ENCODE measurements at regions of chr12 and their contacts with region 1.

Region 1: DNA sequence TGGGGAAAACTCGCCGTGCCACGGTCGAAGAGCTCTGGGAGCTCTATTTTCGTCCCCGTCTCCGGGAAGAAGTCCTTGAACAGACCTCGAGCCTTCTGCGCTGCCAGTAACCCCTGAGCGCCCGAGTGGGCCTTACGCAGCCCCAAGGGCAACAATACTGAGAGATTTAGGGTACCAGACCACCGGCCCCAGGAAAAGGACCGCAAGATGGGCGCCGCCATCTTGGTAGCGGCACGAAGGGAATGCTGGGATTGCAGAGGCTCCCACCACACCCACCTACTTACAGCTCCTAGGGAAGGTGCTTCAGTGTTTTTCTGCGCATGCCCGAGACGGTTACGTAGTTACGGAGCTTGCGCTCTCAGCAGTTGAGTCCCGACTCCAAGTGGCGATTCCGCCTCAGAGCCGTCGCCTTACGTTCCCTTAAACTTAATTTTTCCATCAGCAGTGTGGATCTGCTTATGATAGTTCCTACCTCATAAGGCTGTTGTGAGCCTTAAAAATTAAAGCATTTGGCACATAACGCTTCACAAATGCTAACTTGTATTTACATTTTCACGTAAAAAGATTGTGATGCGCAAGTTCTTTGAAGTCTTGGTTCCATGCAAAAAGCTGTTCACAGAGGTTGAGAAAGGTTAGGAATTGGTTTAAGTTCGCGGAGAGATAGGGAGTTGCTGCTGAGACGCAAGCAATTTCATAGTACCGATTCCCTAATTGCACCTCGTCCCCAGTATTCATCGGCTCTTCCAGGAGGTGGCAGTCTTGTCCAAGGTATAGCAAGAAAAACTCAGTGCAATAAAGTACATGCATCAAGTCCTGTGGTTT is at the start of gene YARS2:
- DNase-seq: peak; percentile 96
- ATAC-seq: peak; percentile 100
- total RNA-seq, gene YARS2: 7.8 TPM

Region 2: DNA sequence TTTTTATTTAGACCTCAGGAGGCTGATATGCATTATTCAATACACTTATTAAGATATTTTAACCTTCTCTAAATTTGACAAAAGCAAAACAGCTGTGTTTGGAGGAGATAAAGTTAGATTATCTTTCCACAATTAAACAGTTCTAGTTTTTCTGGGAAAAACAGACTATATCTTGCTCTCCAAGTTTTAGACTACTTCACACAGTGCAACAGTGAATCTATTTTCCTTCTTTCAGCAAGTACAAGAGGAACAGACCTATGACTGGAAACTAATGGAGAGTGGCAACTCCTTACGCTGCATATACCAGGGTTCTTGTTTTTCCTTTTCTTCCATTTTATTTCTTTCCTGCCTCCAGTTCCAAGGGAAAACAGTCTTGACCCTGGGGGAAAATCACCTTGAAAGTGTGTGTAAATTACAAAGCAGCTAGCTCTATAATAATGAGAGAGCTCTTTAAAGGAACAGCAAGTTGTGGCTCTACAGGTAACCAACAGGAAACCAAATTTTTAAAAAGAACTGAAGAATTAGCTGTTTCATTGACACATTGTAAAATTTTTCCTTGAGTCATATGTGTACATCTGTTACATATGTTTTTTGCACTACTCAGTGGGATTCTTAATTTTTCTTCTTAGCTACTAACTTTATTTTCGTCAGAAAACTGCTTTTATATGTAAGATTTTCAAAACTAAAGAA is 49.4 kb before region 1 on chr12:
- intact Hi-C with region 1: no loop called
- DNase-seq: no peak
- ATAC-seq: no peak

Region 3: GRCh38 chr12:32918890-32919801 is 163.3 kb after region 1 on chr12:
- intact Hi-C with region 1: loop called (anchors 2 kb)
- DNase-seq: no peak
- ATAC-seq: peak; percentile 88

Region 4: DNA sequence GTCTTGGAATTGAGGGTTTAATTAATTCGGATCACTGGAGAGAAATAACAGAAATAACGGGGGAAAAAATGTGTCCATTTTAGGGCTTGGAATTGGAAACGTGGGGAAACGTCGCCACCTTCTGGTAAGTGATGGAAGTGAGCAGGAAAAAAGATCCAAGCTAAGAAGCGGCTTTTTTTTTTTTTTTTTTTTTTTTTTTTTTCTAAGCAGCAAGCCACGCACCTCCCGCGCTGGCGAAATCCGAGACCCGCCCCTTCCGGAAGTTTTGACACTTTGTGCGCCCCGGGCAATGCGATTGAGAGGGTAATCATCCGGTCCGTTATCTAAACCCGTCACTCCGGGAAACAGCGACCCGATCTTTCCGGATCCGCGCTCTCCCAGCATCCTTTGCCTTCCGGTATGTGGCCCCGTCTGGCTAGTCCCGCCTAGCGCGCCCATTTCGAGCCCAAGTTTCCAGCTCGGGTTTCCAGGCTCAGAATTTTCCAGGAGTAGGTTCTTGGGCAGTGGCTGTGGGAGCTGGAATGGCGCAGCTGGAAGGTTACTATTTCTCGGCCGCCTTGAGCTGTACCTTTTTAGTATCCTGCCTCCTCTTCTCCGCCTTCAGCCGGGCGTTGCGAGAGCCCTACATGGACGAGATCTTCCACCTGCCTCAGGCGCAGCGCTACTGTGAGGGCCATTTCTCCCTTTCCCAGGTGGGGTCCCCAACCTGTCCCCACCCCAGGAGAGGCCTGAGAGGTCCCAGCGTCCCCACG is 1266.4 kb after region 1 on chr12 and contains the start of gene ALG10:
- intact Hi-C with region 1: loop called (anchors 5 kb)
- DNase-seq: peak; percentile 96
- ATAC-seq: peak; percentile 100
- total RNA-seq, gene ALG10: 3.7 TPM